Panc1 (cell line): ENCODE measurements at regions of chr5 and their contacts with region 1.

Region 1: GRCh38 chr5:95093211-95093610 is 191.7 kb downstream of the MCTP1 start:
- DNase-seq: no peak
- ATAC-seq: no peak
- H3K4me3 ChIP-seq: no peak overlapping the region
- H3K27ac ChIP-seq: no peak overlapping the region
- H3K4me1 ChIP-seq: no peaks in the 10 kb centered on the region
- H3K27me3 ChIP-seq: no peaks in the 10 kb centered on the region
- CTCF ChIP-seq: no peak

Region 2: GRCh38 chr5:95261437-95262175 is 168.4 kb after region 1 on chr5:
- CTCF ChIA-PET with region 1: no interaction called
- POLR2A ChIA-PET with region 1: interaction called, 14 read pairs
- in situ Hi-C with region 1: no loop called
- intact Hi-C with region 1: no loop called
- DNase-seq: peak; percentile 48
- ATAC-seq: peak; percentile 73
- H3K4me3 ChIP-seq: no peak overlapping the region
- H3K27ac ChIP-seq: no peak overlapping the region
- H3K4me1 ChIP-seq: no peaks in the 10 kb centered on the region
- H3K27me3 ChIP-seq: no peaks in the 10 kb centered on the region; the same call in 1 of the 2 replicates
- CTCF ChIP-seq: peak; percentile 73

Region 3: GRCh38 chr5:96487859-96488258 is 1394.6 kb after region 1 on chr5:
- CTCF ChIA-PET with region 1: no interaction called
- POLR2A ChIA-PET with region 1: interaction called, 14 read pairs
- in situ Hi-C with region 1: no loop called
- intact Hi-C with region 1: no loop called
- DNase-seq: no peak
- ATAC-seq: no peak
- H3K4me3 ChIP-seq: no peak overlapping the region
- H3K27ac ChIP-seq: no peak overlapping the region
- H3K4me1 ChIP-seq: no peaks in the 10 kb centered on the region
- H3K27me3 ChIP-seq: peaks cover 3% of the 10 kb centered on the region; the same call in 1 of the 2 replicates
- CTCF ChIP-seq: no peak